HCT116 (cell line): ENCODE measurements at regions of chr18 and their contacts with region 1.

Region 1: GRCh38 chr18:31555971-31556747 is 35.5 kb upstream of the TTR start:
- DNase-seq: peak; percentile 71
- ATAC-seq: peak; percentile 75
- H3K4me3 ChIP-seq: no peak overlapping the region
- H3K27ac ChIP-seq: no peak overlapping the region
- H3K4me1 ChIP-seq: no peaks in the 10 kb centered on the region; a peak in 1 of 4 replicates
- H3K27me3 ChIP-seq: no peaks in the 10 kb centered on the region
- CTCF ChIP-seq: peak; percentile 68 to 88 (median 86)
- POLR2A ChIP-seq: no peak
- RAD21 ChIP-seq: peak; percentile 90

Region 2: DNA sequence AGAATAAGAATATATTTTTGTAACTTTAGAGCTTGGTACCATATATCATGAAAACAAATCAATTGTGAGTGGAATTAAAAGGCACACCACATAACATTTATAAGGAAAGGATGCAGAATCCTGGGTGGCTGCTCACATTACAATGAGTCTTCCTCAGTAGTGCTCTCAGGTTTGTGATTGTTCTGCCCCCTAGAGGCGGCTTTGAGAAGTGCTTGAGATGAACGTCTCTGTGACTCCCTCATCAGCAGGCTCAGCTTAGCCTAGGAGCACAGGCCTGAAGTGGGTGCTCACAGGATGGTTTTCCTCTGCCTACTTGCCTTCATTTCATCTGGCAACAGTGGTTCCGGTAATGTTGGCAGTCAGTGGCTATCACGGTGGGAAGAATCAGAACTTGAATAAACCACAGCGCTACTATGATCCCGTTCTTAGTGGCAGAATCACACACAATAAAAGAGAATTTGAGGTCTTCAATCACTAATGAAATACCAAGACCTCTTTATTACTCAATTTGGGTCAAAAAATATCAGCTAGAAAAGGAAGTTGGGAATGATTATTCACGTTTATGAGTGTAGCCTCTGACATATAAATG is 166.3 kb after region 1 on chr18:
- CTCF ChIA-PET with region 1: interaction called, 5 read pairs
- POLR2A ChIA-PET with region 1: no interaction called
- RAD21 ChIA-PET with region 1: no interaction called
- intact Hi-C with region 1: loop called (anchors 1 kb)
- DNase-seq: peak; percentile 66
- ATAC-seq: peak; percentile 100
- H3K4me3 ChIP-seq: no peak overlapping the region
- H3K27ac ChIP-seq: no peak overlapping the region
- H3K4me1 ChIP-seq: no peaks in the 10 kb centered on the region
- H3K27me3 ChIP-seq: no peaks in the 10 kb centered on the region
- CTCF ChIP-seq: peak; percentile 68 to 91 (median 89); a peak in 5 of 6 replicates
- POLR2A ChIP-seq: no peak
- RAD21 ChIP-seq: peak; percentile 82

Region 3: GRCh38 chr18:31819106-31819924 is 263.2 kb after region 1 on chr18:
- CTCF ChIA-PET with region 1: interaction called, 8 read pairs
- POLR2A ChIA-PET with region 1: no interaction called
- RAD21 ChIA-PET with region 1: no interaction called
- intact Hi-C with region 1: loop called (anchors 1 kb)
- DNase-seq: peak; percentile 39
- ATAC-seq: peak; percentile 84
- H3K4me3 ChIP-seq: no peak overlapping the region
- H3K27ac ChIP-seq: no peak overlapping the region
- H3K4me1 ChIP-seq: no peaks in the 10 kb centered on the region
- H3K27me3 ChIP-seq: no peaks in the 10 kb centered on the region
- CTCF ChIP-seq: peak; percentile 68 to 82 (median 70); a peak in 5 of 6 replicates
- POLR2A ChIP-seq: no peak
- RAD21 ChIP-seq: peak; percentile 82

Region 4: GRCh38 chr18:31954349-31954748 is 398.2 kb after region 1 on chr18:
- CTCF ChIA-PET with region 1: no interaction called
- POLR2A ChIA-PET with region 1: no interaction called
- RAD21 ChIA-PET with region 1: no interaction called
- intact Hi-C with region 1: loop called (anchors 2 kb)
- DNase-seq: no peak
- ATAC-seq: no peak
- H3K4me3 ChIP-seq: no peak overlapping the region
- H3K27ac ChIP-seq: no peak overlapping the region
- H3K4me1 ChIP-seq: peaks cover 5 to 10% of the 10 kb centered on the region in 2 experiments; a peak in 3 of 4 replicates
- H3K27me3 ChIP-seq: no peaks in the 10 kb centered on the region
- CTCF ChIP-seq: no peak
- POLR2A ChIP-seq: no peak
- RAD21 ChIP-seq: no peak

Region 5: GRCh38 chr18:32072321-32072720 is 516.2 kb after region 1 on chr18:
- CTCF ChIA-PET with region 1: no interaction called
- POLR2A ChIA-PET with region 1: no interaction called
- RAD21 ChIA-PET with region 1: no interaction called
- intact Hi-C with region 1: loop called (anchors 10 kb)
- DNase-seq: no peak
- ATAC-seq: no peak
- H3K4me3 ChIP-seq: no peak overlapping the region
- H3K27ac ChIP-seq: no peak overlapping the region
- H3K4me1 ChIP-seq: no peaks in the 10 kb centered on the region
- H3K27me3 ChIP-seq: no peaks in the 10 kb centered on the region
- CTCF ChIP-seq: peak; percentile 27 to 57 (median 40); a peak in 3 of 6 replicates
- POLR2A ChIP-seq: no peak
- RAD21 ChIP-seq: peak; percentile 56